Transverse colon (tissue), 4 donors: ENCODE measurements at regions of chr17 and their contacts with region 1.

Region 1: DNA sequence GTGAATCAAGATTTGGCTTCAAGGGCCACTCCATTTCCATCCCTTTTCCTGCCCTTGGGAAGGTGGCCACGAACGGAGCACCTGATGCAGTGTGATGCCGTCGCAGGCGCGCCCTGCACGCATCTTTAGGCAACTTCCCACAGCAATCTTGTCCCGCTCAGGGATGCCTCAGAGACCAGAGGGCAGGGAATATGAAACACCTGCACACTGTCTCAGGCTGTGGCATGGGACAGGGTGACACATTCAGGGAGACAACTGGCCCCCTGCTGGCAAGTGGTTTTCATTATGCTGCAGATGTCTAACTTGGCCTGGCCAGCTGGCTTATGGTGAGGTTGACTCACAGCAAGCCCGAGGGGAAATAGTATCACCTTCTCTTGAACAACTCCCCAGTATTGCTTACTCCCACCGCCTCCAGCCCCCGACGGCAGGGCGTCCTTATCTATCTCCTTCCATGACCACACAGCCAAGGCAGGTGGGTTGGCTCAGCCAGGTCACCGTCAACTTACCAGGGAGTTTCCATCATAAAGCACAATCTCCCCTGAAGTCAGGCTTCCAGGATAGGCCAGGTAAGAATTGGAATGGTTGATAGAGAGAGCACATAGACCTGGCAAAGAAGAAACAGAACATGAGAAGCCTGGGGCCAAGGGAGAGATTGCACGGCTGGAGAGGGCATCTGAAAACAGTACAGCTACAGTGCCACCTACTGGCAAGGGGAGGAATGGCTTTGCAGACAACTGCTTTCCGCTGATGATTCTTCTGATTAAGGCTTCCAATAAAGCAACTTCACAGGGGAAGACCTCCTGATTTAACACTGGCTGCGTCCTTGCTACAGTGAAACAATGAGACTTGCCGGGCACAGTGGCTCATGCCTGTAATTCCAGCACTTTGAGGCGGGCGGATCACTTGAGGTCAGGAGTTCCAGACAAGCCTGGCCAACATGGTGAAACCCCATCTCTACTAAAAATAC is 21.1 kb downstream of the WIPI1 start:
- DNase-seq: peak; percentile 84
- H3K4me3 ChIP-seq: no peak overlapping the region
- H3K27ac ChIP-seq: peak overlapping the region in 2 of 4 donors; percentile 2 to 33
- H3K4me1 ChIP-seq: peaks cover 0 to 35% (median 19%) of the 10 kb centered on the region in 4 donors
- H3K27me3 ChIP-seq: no peaks in the 10 kb centered on the region
- CTCF ChIP-seq: peak; percentile 86 to 95 (median 91)
- EP300 ChIP-seq: no peak
- POLR2A ChIP-seq: no peak

Region 2: DNA sequence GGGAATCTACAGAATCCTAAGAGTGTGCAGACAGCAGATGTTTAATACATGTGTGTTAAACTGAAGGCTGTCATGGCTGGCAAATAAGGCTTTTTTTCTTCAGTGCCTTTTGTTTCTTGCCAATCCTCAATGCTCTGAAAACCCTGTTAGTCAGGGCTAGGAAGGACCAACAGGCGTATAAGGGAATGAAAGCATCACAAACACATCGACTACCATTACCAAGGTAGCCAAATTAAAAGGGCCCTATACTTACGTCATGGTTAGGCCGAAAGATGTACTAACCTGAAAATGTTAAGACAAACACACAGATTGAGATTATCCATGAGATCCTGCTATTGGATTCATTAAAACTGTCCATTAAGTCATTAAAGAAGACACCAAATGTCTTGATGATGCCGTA is 158.4 kb before region 1 on chr17:
- in situ Hi-C with region 1: no loop called
- intact Hi-C with region 1: no loop called
- DNase-seq: no peak
- H3K4me3 ChIP-seq: no peak overlapping the region
- H3K27ac ChIP-seq: no peak overlapping the region
- H3K4me1 ChIP-seq: no peaks in the 10 kb centered on the region
- H3K27me3 ChIP-seq: no peaks in the 10 kb centered on the region
- CTCF ChIP-seq: no peak
- EP300 ChIP-seq: no peak
- POLR2A ChIP-seq: no peak

Region 3: GRCh38 chr17:68327823-68328570 is 108.2 kb before region 1 on chr17:
- in situ Hi-C with region 1: no loop called
- intact Hi-C with region 1: no loop called
- DNase-seq: no peak
- H3K4me3 ChIP-seq: no peak overlapping the region
- H3K27ac ChIP-seq: no peak overlapping the region
- H3K4me1 ChIP-seq: no peaks in the 10 kb centered on the region
- H3K27me3 ChIP-seq: no peaks in the 10 kb centered on the region
- CTCF ChIP-seq: no peak
- EP300 ChIP-seq: no peak
- POLR2A ChIP-seq: no peak

Region 4: GRCh38 chr17:68512247-68512982 is 76.3 kb after region 1 on chr17 and contains the start of gene PRKAR1A:
- in situ Hi-C with region 1: no loop called
- intact Hi-C with region 1: no loop called
- DNase-seq: peak; percentile 97
- H3K4me3 ChIP-seq: peak within 1 kb of the TSS; percentile 92 to 98 (median 94)
- H3K27ac ChIP-seq: peak within 1 kb of the TSS; percentile 96 to 99 (median 98)
- H3K4me1 ChIP-seq: peaks cover 14 to 46% (median 27%) of the 10 kb centered on the region in 4 donors
- H3K27me3 ChIP-seq: no peaks in the 10 kb centered on the region
- CTCF ChIP-seq: peak in 4 of 5 experiments; percentile 0 to 25 (median 12)
- EP300 ChIP-seq: peak; percentile 54
- POLR2A ChIP-seq: peak; percentile 87
- total RNA-seq, gene PRKAR1A: 93.9 to 223 (median 160) TPM

Region 5: GRCh38 chr17:69188065-69188464 is 751.9 kb after region 1 on chr17:
- in situ Hi-C with region 1: no loop called
- intact Hi-C with region 1: no loop called
- DNase-seq: no peak
- H3K4me3 ChIP-seq: no peak overlapping the region
- H3K27ac ChIP-seq: no peak overlapping the region
- H3K4me1 ChIP-seq: no peaks in the 10 kb centered on the region
- H3K27me3 ChIP-seq: no peaks in the 10 kb centered on the region
- CTCF ChIP-seq: no peak
- EP300 ChIP-seq: no peak
- POLR2A ChIP-seq: no peak

Region 6: DNA sequence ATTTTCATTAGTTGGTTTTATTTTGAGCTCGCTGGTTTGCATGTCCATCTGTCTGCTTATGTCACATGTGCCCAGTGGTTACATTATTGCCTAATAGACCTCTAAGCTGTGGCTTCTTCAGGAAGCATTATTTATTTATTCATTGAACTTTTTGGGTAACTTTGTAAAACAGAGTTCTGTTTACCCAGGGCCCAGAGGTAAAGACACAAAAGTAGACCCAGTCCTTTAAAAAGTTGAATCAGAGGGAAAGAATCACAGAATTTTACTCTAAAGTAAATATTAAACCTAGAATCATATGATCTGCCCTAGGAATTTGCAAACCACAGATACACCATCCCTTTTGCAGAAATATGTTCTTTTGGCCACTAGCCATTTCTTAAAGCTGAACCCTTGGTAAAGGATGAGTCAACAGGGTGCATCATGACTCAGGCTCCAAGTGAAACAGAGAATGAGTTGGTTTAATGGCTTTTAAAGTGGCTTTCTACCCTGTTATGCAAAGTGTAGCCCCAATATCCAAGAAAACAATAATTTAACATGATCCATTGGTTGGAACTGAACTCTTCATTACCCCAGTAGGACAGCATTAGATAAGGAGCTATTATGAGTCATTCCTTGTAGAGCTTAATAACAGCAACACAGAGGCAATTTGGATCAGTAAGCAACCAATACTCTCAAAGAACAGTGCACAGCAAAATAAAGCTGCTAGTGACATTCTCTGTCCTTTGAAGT is 1969.5 kb after region 1 on chr17:
- in situ Hi-C with region 1: no loop called
- intact Hi-C with region 1: loop called (anchors 10 kb)
- DNase-seq: no peak
- H3K4me3 ChIP-seq: no peak overlapping the region
- H3K27ac ChIP-seq: no peak overlapping the region
- H3K4me1 ChIP-seq: no peaks in the 10 kb centered on the region
- H3K27me3 ChIP-seq: no peaks in the 10 kb centered on the region
- CTCF ChIP-seq: no peak
- EP300 ChIP-seq: no peak
- POLR2A ChIP-seq: no peak